CD14-positive monocyte (primary cell): ENCODE measurements at regions of chr11 and their contacts with region 1.

Region 1: GRCh38 chr11:93784152-93784934 is at the start of gene MED17:
- DNase-seq: peak; percentile 83 to 89 (median 88)
- H3K4me3 ChIP-seq: peak within 1 kb of the TSS; percentile 72 to 97 (median 95)
- H3K4me3 Mint-ChIP-seq: peak within 1 kb of the TSS; percentile 96 to 98
- H3K27ac ChIP-seq: peak within 1 kb of the TSS; percentile 94 to 96
- H3K27ac Mint-ChIP-seq: peak within 1 kb of the TSS; percentile 67 to 97 (median 90)
- H3K4me1 ChIP-seq: peaks cover 16 to 34% of the 10 kb centered on the region in 2 donors
- H3K4me1 Mint-ChIP-seq: peaks cover 33% of the 10 kb centered on the region
- H3K27me3 ChIP-seq: no peaks in the 10 kb centered on the region
- H3K27me3 Mint-ChIP-seq: no peaks in the 10 kb centered on the region
- CTCF ChIP-seq: peak; percentile 59
- polyA plus RNA-seq, gene MED17: 3.4 to 12.8 (median 4.4) TPM

Region 2: GRCh38 chr11:93188726-93189125 is 595.6 kb before region 1 on chr11:
- intact Hi-C with region 1: no loop called
- DNase-seq: peak in 1 of 3 donors; percentile 41
- H3K4me3 ChIP-seq: no peak overlapping the region
- H3K4me3 Mint-ChIP-seq: no peak overlapping the region
- H3K27ac ChIP-seq: peak overlapping the region in 1 of 2 donors; percentile 46
- H3K27ac Mint-ChIP-seq: peak overlapping the region in 4 of 7 donors; percentile 42 to 77 (median 56)
- H3K4me1 ChIP-seq: peaks cover 9 to 18% of the 10 kb centered on the region in 2 donors
- H3K4me1 Mint-ChIP-seq: peaks cover 18% of the 10 kb centered on the region
- H3K27me3 ChIP-seq: no peaks in the 10 kb centered on the region
- H3K27me3 Mint-ChIP-seq: peaks cover 0 to 1% (median 0%) of the 10 kb centered on the region in 3 donors
- CTCF ChIP-seq: no peak

Region 3: DNA sequence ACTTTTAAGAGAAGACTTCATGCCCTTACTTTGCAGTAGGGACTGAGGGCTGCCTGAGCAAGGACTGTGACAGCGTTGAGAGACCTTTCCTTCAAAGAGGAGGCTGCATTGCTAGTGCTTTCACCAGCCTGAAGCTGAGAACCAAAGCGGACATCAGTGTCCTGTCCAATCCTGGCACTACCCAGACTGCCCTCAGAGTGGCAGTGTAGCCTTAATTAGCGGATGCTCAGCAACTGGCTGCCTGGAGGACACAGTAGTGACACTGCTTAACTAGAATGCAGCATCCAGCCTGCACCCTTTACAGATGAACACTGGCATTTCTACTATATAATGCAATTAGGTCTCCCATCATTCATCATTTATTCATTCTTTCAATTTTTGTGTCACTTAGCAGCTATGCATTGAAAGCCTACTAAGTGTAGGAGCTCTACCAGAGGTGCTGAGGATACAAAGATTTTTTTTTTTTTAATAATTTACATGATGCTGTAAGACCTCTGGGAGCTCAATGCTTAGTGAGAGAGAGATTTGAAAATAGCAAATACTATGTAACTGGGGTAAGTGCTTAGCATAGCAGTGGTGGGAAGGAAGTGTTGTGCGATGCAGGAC is 549.6 kb before region 1 on chr11:
- intact Hi-C with region 1: loop called in 1 of 2 experiments (anchors 5 kb)
- DNase-seq: peak; percentile 53 to 70 (median 69)
- H3K4me3 ChIP-seq: no peak overlapping the region
- H3K4me3 Mint-ChIP-seq: no peak overlapping the region
- H3K27ac ChIP-seq: no peak overlapping the region
- H3K27ac Mint-ChIP-seq: no peak overlapping the region
- H3K4me1 ChIP-seq: no peaks in the 10 kb centered on the region
- H3K4me1 Mint-ChIP-seq: no peaks in the 10 kb centered on the region
- H3K27me3 ChIP-seq: peaks cover 0 to 2% of the 10 kb centered on the region in 2 donors
- H3K27me3 Mint-ChIP-seq: peaks cover 2 to 9% (median 4%) of the 10 kb centered on the region in 3 donors
- CTCF ChIP-seq: peak; percentile 94

Region 4: DNA sequence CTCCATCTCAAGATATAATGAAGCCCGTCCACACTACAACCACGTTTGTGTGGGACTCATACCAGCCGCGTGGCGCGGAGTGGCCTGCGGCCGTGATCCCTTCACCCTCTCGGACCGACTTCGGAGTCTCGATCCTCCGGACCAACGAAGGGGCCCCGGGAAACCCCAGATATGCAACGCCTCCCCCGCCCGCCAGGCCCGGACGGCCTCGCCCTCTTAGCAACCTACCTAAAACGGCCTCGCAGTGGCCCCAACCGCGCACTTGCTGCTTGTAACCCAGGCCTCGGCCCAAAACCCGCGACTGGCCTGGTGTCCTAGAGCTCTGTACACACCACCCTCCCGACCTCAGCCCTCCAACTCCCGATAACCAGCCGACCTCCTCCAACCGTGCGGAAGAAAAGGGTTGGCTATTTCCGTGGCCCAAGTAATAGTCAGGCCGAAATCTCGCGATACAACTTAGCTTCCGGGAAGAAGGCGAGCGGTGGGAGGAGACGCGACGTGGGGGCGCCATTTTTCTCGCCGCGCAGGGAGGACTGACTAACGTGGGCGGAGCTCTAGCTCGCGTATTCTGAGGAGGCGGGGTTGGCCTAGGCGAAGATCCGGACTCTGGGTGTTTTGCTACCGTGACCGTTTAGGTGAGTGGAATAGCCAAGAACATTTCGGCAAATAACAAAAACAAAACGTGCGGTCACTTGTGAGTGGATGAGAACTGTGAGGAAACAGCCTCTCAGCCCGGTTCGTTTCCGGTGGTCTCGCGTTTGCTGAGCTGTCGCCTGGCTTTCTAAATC is 43.1 kb before region 1 on chr11 and contains the starts of genes C11orf54 and TAF1D:
- intact Hi-C with region 1: loop called (anchors 5 kb)
- DNase-seq: peak; percentile 97 to 98 (median 97)
- H3K4me3 ChIP-seq: peak within 1 kb of the TSS; percentile 64 to 97 (median 73)
- H3K4me3 Mint-ChIP-seq: peak within 1 kb of the TSS; percentile 99
- H3K27ac ChIP-seq: peak within 1 kb of the TSS; percentile 88 to 97
- H3K27ac Mint-ChIP-seq: peak within 1 kb of the TSS; percentile 97 to 100 (median 99)
- H3K4me1 ChIP-seq: peaks cover 34 to 40% of the 10 kb centered on the region in 2 donors
- H3K4me1 Mint-ChIP-seq: peaks cover 49% of the 10 kb centered on the region
- H3K27me3 ChIP-seq: no peaks in the 10 kb centered on the region
- H3K27me3 Mint-ChIP-seq: peaks cover 0 to 2% (median 0%) of the 10 kb centered on the region in 3 donors
- CTCF ChIP-seq: no peak
- polyA plus RNA-seq, gene C11orf54: 8.3 to 23.6 (median 14.1) TPM
- polyA plus RNA-seq, gene TAF1D: 5.9 to 68.3 (median 7.4) TPM